ENCODE measurements at regions of chr10 and their contacts with region 1.

Region 1: DNA sequence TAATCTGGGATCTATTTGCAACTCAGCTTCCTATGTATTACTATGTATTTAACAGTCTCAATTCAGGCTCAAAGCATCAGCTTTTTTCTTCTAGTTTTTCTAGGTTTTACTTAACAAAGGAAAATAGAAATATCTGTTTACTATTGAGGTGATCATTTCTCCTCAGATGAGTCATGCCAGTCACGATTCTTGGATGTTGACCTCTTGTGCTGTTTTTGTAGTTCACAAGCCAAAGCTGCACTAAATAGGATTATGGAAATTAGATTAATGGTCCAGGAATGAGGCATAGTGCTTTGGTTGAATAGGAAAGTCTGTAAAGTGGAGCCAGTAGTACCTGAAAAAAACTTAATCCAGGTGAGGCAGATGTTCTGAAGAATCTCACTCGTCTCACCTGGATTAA is 198.3 kb upstream of the KAT6B start:
- DNase-seq: no peak
- ATAC-seq: peak; percentile 65
- H3K4me3 ChIP-seq: no peak overlapping the region
- H3K27ac ChIP-seq: no peak overlapping the region
- H3K4me1 ChIP-seq: no peaks in the 10 kb centered on the region
- H3K27me3 ChIP-seq: no peaks in the 10 kb centered on the region
- CTCF ChIP-seq: no peak

Region 2: DNA sequence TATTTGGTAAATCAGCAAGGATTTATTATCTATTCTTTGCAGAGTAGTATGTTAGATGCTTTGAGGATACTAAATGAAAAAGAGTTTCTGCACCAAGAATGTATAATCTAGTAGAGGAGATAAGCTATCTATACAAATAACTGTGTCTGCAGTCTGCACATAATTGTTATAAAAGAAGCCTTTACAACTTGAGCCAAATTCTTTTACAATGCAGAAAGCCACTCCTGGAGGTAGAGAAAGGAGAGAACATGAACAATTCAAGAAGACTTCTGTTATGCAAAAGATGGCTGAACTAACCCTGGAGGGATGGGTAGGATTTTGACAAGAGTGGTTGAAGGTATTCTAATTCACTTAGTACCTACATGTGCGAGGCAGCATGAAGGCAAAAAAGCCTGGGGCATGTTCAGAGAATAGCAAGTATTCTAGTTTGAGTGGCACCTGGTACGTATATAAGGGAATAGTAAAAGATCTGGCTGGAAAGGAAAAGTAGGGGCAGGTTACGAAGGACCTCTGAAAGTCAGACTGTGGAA is 52.9 kb before region 1 on chr10:
- CTCF ChIA-PET with region 1: interaction called, 15 read pairs
- POLR2A ChIA-PET with region 1: no interaction called
- intact Hi-C with region 1: no loop called
- DNase-seq: no peak
- ATAC-seq: no peak
- H3K4me3 ChIP-seq: no peak overlapping the region
- H3K27ac ChIP-seq: no peak overlapping the region
- H3K4me1 ChIP-seq: no peaks in the 10 kb centered on the region
- H3K27me3 ChIP-seq: no peaks in the 10 kb centered on the region
- CTCF ChIP-seq: no peak

Measured in PC-3 (cell line).